CD4-positive, alpha-beta T cell (primary cell): ENCODE measurements at regions of chr11 and their contacts with region 1.

Region 1: DNA sequence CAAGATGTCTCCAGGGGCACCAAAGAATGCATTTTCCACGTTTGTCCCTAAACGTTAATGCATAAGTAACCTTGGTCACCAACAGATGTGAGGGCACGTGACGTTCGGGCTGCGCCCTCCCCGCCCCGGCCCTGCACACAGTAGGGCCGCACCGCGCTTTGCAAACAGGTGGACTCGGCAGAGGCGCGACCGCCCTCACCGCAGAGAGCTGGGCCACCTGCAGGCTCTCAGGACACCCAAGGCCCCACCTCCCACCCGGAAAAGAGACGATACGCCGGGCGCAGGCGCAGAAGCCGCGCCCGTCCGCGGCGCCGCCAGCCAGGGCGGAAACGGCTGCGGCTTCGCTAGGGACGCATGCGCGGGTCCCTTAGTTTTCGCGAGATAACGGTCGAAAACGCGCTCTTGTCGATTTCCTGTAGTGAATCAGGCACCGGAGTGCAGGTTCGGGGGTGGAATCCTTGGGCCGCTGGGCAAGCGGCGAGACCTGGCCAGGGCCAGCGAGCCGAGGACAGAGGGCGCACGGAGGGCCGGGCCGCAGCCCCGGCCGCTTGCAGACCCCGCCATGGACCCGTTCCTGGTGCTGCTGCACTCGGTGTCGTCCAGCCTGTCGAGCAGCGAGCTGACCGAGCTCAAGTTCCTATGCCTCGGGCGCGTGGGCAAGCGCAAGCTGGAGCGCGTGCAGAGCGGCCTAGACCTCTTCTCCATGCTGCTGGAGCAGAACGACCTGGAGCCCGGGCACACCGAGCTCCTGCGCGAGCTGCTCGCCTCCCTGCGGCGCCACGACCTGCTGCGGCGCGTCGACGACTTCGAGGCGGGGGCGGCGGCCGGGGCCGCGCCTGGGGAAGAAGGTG is at the start of gene FADD:
- DNase-seq: peak; percentile 84 to 97 (median 89)
- ATAC-seq: peak; percentile 52
- H3K4me3 ChIP-seq: peak within 1 kb of the TSS; percentile 81
- H3K4me3 Mint-ChIP-seq: peak within 1 kb of the TSS; percentile 99
- H3K27ac ChIP-seq: peak within 1 kb of the TSS; percentile 90 to 97
- H3K27ac Mint-ChIP-seq: peak within 1 kb of the TSS; percentile 98
- H3K4me1 ChIP-seq: peaks cover 44% of the 10 kb centered on the region
- H3K4me1 Mint-ChIP-seq: peaks cover 48% of the 10 kb centered on the region
- H3K27me3 ChIP-seq: no peaks in the 10 kb centered on the region
- H3K27me3 Mint-ChIP-seq: no peaks in the 10 kb centered on the region
- CTCF ChIP-seq: no peak
- total RNA-seq, gene FADD: 14.5 to 16.5 TPM

Region 2: GRCh38 chr11:68903288-68904247 is 1299.6 kb before region 1 on chr11 and contains the starts of genes IGHMBP2 and MRPL21:
- CTCF ChIA-PET with region 1: no interaction called
- POLR2A ChIA-PET with region 1: no interaction called
- intact Hi-C with region 1: loop called in 1 of 2 experiments (anchors 10 kb)
- DNase-seq: peak; percentile 71 to 93 (median 82)
- ATAC-seq: peak; percentile 92
- H3K4me3 ChIP-seq: peak within 1 kb of the TSS; percentile 95
- H3K4me3 Mint-ChIP-seq: peak within 1 kb of the TSS; percentile 98
- H3K27ac ChIP-seq: peak within 1 kb of the TSS; percentile 57 to 67
- H3K27ac Mint-ChIP-seq: peak within 1 kb of the TSS; percentile 92
- H3K4me1 ChIP-seq: peaks cover 31% of the 10 kb centered on the region
- H3K4me1 Mint-ChIP-seq: peaks cover 50% of the 10 kb centered on the region
- H3K27me3 ChIP-seq: no peaks in the 10 kb centered on the region
- H3K27me3 Mint-ChIP-seq: no peaks in the 10 kb centered on the region
- CTCF ChIP-seq: no peak
- total RNA-seq, gene IGHMBP2: 17.5 to 18.5 TPM
- total RNA-seq, gene MRPL21: 47.5 to 48.0 TPM

Region 3: DNA sequence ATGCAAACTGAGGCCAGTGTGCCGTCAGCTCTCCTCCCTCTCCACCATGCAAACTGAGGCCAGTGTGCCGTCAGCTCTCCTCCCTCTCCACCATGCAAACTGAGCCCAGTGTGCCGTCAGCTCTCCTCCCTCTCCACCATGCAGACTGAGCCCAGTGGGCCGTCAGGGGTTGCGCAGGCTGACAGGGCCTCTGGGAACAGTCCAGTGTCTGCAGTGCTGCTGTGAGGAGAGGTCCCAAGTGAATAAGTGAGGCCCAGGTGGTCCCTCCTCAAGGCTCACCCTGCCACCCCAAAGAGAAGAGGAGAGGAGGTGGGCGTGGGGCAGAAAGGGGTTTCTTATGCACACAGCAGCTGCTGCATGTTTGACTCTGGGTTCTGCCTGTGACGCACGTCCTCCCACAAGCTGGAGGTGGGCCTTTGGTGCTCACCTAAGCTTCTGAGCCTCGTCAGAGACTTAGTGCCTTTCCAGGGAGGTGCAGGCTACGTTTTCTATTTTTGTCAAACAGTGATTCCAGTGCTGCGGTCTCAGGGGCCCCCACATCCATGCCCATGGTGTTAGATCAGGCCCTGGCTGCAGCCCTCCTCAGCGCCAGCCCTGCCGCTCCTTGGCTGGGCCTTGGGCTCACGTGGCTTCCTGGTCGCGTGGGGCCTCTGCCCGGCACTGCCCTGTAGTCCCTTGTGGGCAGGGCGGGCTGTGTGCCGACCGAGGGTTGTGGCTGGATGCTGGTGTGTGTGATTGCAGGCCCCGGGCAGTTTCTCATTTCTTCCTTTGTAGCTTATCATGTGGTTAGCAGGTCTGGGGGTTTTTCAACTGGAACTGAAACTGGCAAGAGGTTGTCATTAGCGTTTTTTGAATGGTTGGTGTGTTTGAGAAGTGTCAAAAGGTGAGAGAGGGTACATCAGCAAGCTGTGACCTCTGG is 1147.3 kb before region 1 on chr11:
- CTCF ChIA-PET with region 1: no interaction called
- POLR2A ChIA-PET with region 1: no interaction called
- intact Hi-C with region 1: loop called in 1 of 2 experiments (anchors 10 kb)
- DNase-seq: peak in 3 of 14 experiments; percentile 36 to 66 (median 61)
- ATAC-seq: peak; percentile 32
- H3K4me3 ChIP-seq: no peak overlapping the region
- H3K4me3 Mint-ChIP-seq: no peak overlapping the region
- H3K27ac ChIP-seq: no peak overlapping the region
- H3K27ac Mint-ChIP-seq: peak overlapping the region; percentile 7
- H3K4me1 ChIP-seq: peaks cover 19% of the 10 kb centered on the region
- H3K4me1 Mint-ChIP-seq: peaks cover 12% of the 10 kb centered on the region
- H3K27me3 ChIP-seq: no peaks in the 10 kb centered on the region
- H3K27me3 Mint-ChIP-seq: no peaks in the 10 kb centered on the region
- CTCF ChIP-seq: no peak

Region 4: DNA sequence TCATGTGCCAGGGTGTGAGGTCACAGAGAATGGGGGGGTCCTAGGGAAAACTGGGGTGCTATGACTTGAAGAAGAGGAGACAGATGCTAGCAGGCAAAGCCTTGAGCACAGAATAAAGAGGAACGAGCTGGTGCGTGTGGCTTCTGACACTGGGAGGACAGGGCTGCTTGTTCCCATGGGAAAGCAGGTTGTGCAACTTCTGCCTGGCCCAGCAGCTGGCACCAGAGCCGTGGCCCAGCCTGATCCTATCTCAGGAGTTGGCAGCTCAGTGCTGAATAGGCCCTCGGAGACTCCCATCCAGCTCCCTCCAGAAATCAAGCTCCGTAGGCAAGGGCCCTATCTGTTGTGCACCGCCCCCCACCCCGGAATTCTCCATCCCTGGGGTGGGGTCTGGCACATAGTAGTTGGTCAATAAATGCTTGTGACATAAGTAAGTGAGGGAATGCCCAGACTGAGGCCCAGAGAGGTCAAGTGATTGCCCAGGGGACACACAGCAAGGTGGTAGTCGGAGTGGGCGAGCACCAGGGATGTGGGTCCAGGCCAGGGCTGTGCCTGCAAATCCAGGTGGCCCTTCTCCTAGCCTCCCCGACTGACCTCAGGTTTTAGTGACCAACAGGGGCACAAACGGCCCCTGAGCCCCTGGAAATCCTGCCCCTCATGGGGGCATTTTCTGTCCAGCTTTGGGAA is 19.5 kb before region 1 on chr11:
- CTCF ChIA-PET with region 1: no interaction called
- POLR2A ChIA-PET with region 1: no interaction called
- intact Hi-C with region 1: no loop called
- DNase-seq: no peak
- ATAC-seq: no peak
- H3K4me3 ChIP-seq: no peak overlapping the region
- H3K4me3 Mint-ChIP-seq: no peak overlapping the region
- H3K27ac ChIP-seq: no peak overlapping the region
- H3K27ac Mint-ChIP-seq: no peak overlapping the region
- H3K4me1 ChIP-seq: no peaks in the 10 kb centered on the region
- H3K4me1 Mint-ChIP-seq: no peaks in the 10 kb centered on the region
- H3K27me3 ChIP-seq: no peaks in the 10 kb centered on the region
- H3K27me3 Mint-ChIP-seq: no peaks in the 10 kb centered on the region
- CTCF ChIP-seq: no peak

Region 5: DNA sequence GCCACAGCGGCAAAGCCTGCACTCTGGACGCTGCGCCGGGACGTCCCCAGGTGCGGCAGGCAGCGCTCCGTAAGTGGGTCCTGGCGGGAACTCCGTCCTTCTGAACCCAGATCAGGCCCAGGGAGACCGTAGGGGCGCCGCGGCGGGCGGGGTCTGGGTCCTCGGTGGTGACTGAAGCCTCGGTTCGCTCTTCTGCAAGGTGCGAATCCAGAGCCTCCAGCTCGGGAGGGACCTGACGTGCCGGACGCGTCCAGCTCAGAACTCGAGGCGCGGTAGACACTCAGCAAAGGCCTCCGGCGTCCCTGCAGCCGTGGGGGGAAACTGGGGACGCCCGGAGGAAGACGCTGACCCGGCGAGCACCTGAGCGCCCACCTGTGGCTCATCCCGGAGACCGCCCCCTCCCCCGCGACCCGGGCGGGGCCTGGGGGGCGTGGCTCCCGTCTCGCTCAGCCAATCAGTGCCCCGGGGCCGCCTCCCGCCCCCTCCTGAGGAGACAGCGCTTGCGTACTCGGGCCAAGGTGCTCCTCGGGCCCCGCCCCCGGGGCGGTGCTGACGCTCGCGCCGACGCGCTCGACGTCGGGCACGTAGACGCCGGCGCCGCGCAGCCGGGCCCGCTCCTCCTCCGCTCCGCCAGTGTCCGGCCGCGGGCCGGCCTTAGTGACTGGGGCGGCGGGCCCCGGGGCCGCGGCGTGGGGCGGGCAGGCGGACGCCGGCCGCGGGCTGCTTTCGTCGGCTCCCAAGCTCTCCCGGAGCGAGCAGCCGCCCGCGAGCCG is 67.2 kb after region 1 on chr11 and contains the start of gene PPFIA1:
- CTCF ChIA-PET with region 1: interaction called, 8 read pairs
- POLR2A ChIA-PET with region 1: interaction called, 11 read pairs
- intact Hi-C with region 1: loop called (anchors 1 kb)
- DNase-seq: peak; percentile 89 to 98 (median 96)
- ATAC-seq: peak; percentile 92
- H3K4me3 ChIP-seq: peak within 1 kb of the TSS; percentile 98
- H3K4me3 Mint-ChIP-seq: peak within 1 kb of the TSS; percentile 94
- H3K27ac ChIP-seq: peak within 1 kb of the TSS in 1 of 2 donors; percentile 58
- H3K27ac Mint-ChIP-seq: peak within 1 kb of the TSS; percentile 88
- H3K4me1 ChIP-seq: peaks cover 24% of the 10 kb centered on the region
- H3K4me1 Mint-ChIP-seq: peaks cover 35% of the 10 kb centered on the region
- H3K27me3 ChIP-seq: peaks cover 4 to 7% of the 10 kb centered on the region in 2 experiments
- H3K27me3 Mint-ChIP-seq: peaks cover 12% of the 10 kb centered on the region
- CTCF ChIP-seq: no peak
- total RNA-seq, gene PPFIA1: 34.3 to 42.0 TPM